ENCODE measurements at regions of chr5 and their contacts with region 1.

Region 1: GRCh38 chr5:104178829-104179456 is 616.4 kb upstream of the NUDT12 start:
- DNase-seq: peak; percentile 19
- ATAC-seq: peak; percentile 99
- H3K4me3 ChIP-seq: no peak overlapping the region
- H3K27ac ChIP-seq: no peak overlapping the region
- H3K4me1 ChIP-seq: no peaks in the 10 kb centered on the region
- H3K27me3 ChIP-seq: no peaks in the 10 kb centered on the region
- CTCF ChIP-seq: peak; percentile 39 to 60 (median 51); a peak in 4 of 6 replicates
- EP300 ChIP-seq: no peak
- POLR2A ChIP-seq: no peak
- RAD21 ChIP-seq: peak; percentile 72

Region 2: DNA sequence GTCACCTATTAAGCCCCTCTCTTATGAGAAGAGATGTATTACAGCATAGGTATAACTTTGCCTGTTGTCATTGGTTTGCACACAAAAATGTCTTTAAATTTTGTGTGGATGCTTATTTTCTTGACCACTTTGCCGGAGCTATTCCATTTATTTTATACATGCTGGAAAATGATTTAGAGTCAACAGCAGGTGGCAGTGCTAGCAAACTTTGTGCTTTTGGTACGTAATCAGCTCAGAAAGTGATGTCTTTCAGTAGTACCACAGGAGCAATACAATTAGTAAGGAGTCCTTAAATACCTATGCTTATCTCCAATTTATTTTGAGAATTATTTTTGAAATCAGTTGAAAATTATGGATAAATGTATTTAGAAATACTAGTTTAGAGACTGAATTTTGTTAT is 596.6 kb before region 1 on chr5:
- CTCF ChIA-PET with region 1: interaction called, 41 read pairs
- POLR2A ChIA-PET with region 1: no interaction called
- RAD21 ChIA-PET with region 1: interaction called, 17 read pairs
- SMC1A ChIA-PET with region 1: interaction called, 14 read pairs
- in situ Hi-C with region 1: loop called (anchors 5 kb)
- intact Hi-C with region 1: loop called (anchors 1 kb)
- DNase-seq: peak; percentile 5
- ATAC-seq: peak; percentile 63
- H3K4me3 ChIP-seq: no peak overlapping the region
- H3K27ac ChIP-seq: no peak overlapping the region
- H3K4me1 ChIP-seq: no peaks in the 10 kb centered on the region
- H3K27me3 ChIP-seq: no peaks in the 10 kb centered on the region
- CTCF ChIP-seq: peak; percentile 35 to 49 (median 42); a peak in 5 of 6 replicates
- EP300 ChIP-seq: no peak
- POLR2A ChIP-seq: no peak
- RAD21 ChIP-seq: peak; percentile 64

Region 3: DNA sequence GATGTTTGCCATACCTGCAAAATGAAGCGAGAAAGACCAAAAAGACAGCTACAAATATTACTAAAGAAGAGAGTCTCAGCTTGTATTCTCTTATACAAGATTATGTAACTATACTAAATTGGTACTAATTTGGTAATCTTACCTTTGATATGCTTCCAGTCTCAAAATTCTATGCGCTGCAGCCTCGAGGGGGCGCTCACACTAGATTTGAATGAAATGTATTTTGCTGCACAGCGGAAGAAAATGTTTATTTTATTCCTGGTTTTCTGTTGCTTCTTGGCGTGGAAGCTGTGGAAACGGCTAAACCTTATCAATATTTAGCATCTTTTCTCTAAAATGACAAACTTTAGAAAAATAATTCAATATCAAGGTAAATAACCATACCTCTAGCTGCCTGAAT is 349.4 kb before region 1 on chr5:
- CTCF ChIA-PET with region 1: interaction called, 45 read pairs
- POLR2A ChIA-PET with region 1: no interaction called
- RAD21 ChIA-PET with region 1: interaction called, 4 read pairs
- SMC1A ChIA-PET with region 1: interaction called, 15 read pairs
- in situ Hi-C with region 1: no loop called
- intact Hi-C with region 1: loop called (anchors 1 kb)
- DNase-seq: no peak
- ATAC-seq: 0 out of 3 replicates have a peak, but pooled peaks have one; percentile 42
- H3K4me3 ChIP-seq: no peak overlapping the region
- H3K27ac ChIP-seq: no peak overlapping the region
- H3K4me1 ChIP-seq: no peaks in the 10 kb centered on the region
- H3K27me3 ChIP-seq: no peaks in the 10 kb centered on the region; a peak in 2 of 4 replicates
- CTCF ChIP-seq: peak; percentile 40 to 41 (median 41)
- EP300 ChIP-seq: no peak
- POLR2A ChIP-seq: no peak
- RAD21 ChIP-seq: 0 out of 2 replicates have a peak, but pooled peaks have one; percentile 7

Region 4: GRCh38 chr5:103881560-103881959 is 297.4 kb before region 1 on chr5:
- CTCF ChIA-PET with region 1: interaction called, 11 read pairs
- POLR2A ChIA-PET with region 1: no interaction called
- RAD21 ChIA-PET with region 1: interaction called, 8 read pairs
- SMC1A ChIA-PET with region 1: interaction called, 3 read pairs
- in situ Hi-C with region 1: no loop called
- intact Hi-C with region 1: no loop called
- DNase-seq: no peak
- ATAC-seq: no peak
- H3K4me3 ChIP-seq: no peak overlapping the region
- H3K27ac ChIP-seq: no peak overlapping the region
- H3K4me1 ChIP-seq: no peaks in the 10 kb centered on the region
- H3K27me3 ChIP-seq: 0 out of 4 replicates have a peak, but pooled peaks cover 0 to 2% of the 10 kb centered on the region in 2 experiments
- CTCF ChIP-seq: no peak
- EP300 ChIP-seq: no peak
- POLR2A ChIP-seq: no peak
- RAD21 ChIP-seq: no peak

Region 5: GRCh38 chr5:104088876-104089778 is 89.8 kb before region 1 on chr5:
- CTCF ChIA-PET with region 1: interaction called, 5 read pairs
- POLR2A ChIA-PET with region 1: no interaction called
- RAD21 ChIA-PET with region 1: interaction called, 4 read pairs
- SMC1A ChIA-PET with region 1: no interaction called
- in situ Hi-C with region 1: no loop called
- intact Hi-C with region 1: loop called (anchors 2 kb)
- DNase-seq: peak; percentile 45
- ATAC-seq: peak; percentile 98
- H3K4me3 ChIP-seq: no peak overlapping the region
- H3K27ac ChIP-seq: no peak overlapping the region
- H3K4me1 ChIP-seq: no peaks in the 10 kb centered on the region
- H3K27me3 ChIP-seq: no peaks in the 10 kb centered on the region
- CTCF ChIP-seq: no peak
- EP300 ChIP-seq: peak; percentile 36 to 76; a peak in 2 of 4 replicates
- POLR2A ChIP-seq: no peak
- RAD21 ChIP-seq: no peak

Region 6: DNA sequence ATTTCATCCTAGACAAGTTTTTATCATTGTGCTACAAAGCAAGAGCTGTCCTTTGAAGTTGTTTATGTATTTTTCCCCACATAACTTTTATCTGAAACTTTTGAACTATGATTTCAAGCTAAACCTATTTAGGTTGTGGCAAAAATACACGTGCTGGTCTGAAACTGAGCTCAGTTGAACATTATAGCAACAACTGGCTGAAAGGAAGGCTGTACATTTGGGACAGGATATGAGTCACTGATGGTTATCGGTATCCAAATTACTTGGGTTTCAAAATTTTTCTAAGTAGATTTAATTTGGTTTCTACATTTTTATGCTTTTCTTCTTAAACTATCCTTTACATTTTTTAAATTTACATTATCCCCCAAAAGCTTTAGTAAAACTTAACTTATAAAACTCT is 11.0 kb after region 1 on chr5:
- CTCF ChIA-PET with region 1: interaction called, 11 read pairs
- POLR2A ChIA-PET with region 1: no interaction called
- RAD21 ChIA-PET with region 1: interaction called, 5 read pairs
- SMC1A ChIA-PET with region 1: interaction called, 13 read pairs
- in situ Hi-C with region 1: no loop called
- intact Hi-C with region 1: no loop called
- DNase-seq: no peak
- ATAC-seq: peak; percentile 57; the same call in 2 of the 3 replicates
- H3K4me3 ChIP-seq: no peak overlapping the region
- H3K27ac ChIP-seq: no peak overlapping the region
- H3K4me1 ChIP-seq: no peaks in the 10 kb centered on the region
- H3K27me3 ChIP-seq: no peaks in the 10 kb centered on the region
- CTCF ChIP-seq: no peak
- EP300 ChIP-seq: no peak
- POLR2A ChIP-seq: no peak
- RAD21 ChIP-seq: no peak

Region 7: GRCh38 chr5:104659514-104659913 is 480.6 kb after region 1 on chr5:
- CTCF ChIA-PET with region 1: no interaction called
- POLR2A ChIA-PET with region 1: no interaction called
- RAD21 ChIA-PET with region 1: no interaction called
- SMC1A ChIA-PET with region 1: no interaction called
- in situ Hi-C with region 1: no loop called
- intact Hi-C with region 1: no loop called
- DNase-seq: no peak
- ATAC-seq: no peak
- H3K4me3 ChIP-seq: no peak overlapping the region
- H3K27ac ChIP-seq: no peak overlapping the region
- H3K4me1 ChIP-seq: no peaks in the 10 kb centered on the region
- H3K27me3 ChIP-seq: no peaks in the 10 kb centered on the region
- CTCF ChIP-seq: no peak
- EP300 ChIP-seq: no peak
- POLR2A ChIP-seq: no peak
- RAD21 ChIP-seq: no peak